Activated CD8-positive, alpha-beta T cell treated with anti-CD3 and anti-CD28 coated beads, Interleukin-2, amount 10 ng/mL, durations not matched to agents 7 days and 5 days (primary cell): ENCODE measurements at regions of chr2 and their contacts with region 1.

Region 1: GRCh38 chr2:241149925-241150659 is at the start of gene PPP1R7:
- DNase-seq: peak; percentile 96
- ATAC-seq: peak; percentile 83
- H3K4me3 Mint-ChIP-seq: peak within 1 kb of the TSS; percentile 96
- H3K27ac Mint-ChIP-seq: peak within 1 kb of the TSS; percentile 91
- H3K4me1 Mint-ChIP-seq: peaks cover 36% of the 10 kb centered on the region
- H3K27me3 Mint-ChIP-seq: no peaks in the 10 kb centered on the region
- total RNA-seq, gene PPP1R7: 90.8 to 97.2 TPM

Region 2: GRCh38 chr2:241081643-241082340 is 68.3 kb before region 1 on chr2:
- CTCF ChIA-PET with region 1: interaction called, 30 read pairs
- POLR2A ChIA-PET with region 1: interaction called, 4 read pairs
- DNase-seq: no peak
- ATAC-seq: no peak
- H3K4me3 Mint-ChIP-seq: no peak overlapping the region
- H3K27ac Mint-ChIP-seq: no peak overlapping the region
- H3K4me1 Mint-ChIP-seq: no peaks in the 10 kb centered on the region
- H3K27me3 Mint-ChIP-seq: no peaks in the 10 kb centered on the region

Region 3: GRCh38 chr2:241102239-241102803 is 47.8 kb before region 1 on chr2 and contains the start of gene MTERF4:
- CTCF ChIA-PET with region 1: interaction called, 8 read pairs
- POLR2A ChIA-PET with region 1: interaction called, 18 read pairs
- DNase-seq: peak; percentile 89
- ATAC-seq: peak; percentile 97
- H3K4me3 Mint-ChIP-seq: peak within 1 kb of the TSS; percentile 96
- H3K27ac Mint-ChIP-seq: peak within 1 kb of the TSS; percentile 98
- H3K4me1 Mint-ChIP-seq: peaks cover 41% of the 10 kb centered on the region
- H3K27me3 Mint-ChIP-seq: no peaks in the 10 kb centered on the region
- total RNA-seq, gene MTERF4: 24.1 to 26.3 TPM

Region 4: DNA sequence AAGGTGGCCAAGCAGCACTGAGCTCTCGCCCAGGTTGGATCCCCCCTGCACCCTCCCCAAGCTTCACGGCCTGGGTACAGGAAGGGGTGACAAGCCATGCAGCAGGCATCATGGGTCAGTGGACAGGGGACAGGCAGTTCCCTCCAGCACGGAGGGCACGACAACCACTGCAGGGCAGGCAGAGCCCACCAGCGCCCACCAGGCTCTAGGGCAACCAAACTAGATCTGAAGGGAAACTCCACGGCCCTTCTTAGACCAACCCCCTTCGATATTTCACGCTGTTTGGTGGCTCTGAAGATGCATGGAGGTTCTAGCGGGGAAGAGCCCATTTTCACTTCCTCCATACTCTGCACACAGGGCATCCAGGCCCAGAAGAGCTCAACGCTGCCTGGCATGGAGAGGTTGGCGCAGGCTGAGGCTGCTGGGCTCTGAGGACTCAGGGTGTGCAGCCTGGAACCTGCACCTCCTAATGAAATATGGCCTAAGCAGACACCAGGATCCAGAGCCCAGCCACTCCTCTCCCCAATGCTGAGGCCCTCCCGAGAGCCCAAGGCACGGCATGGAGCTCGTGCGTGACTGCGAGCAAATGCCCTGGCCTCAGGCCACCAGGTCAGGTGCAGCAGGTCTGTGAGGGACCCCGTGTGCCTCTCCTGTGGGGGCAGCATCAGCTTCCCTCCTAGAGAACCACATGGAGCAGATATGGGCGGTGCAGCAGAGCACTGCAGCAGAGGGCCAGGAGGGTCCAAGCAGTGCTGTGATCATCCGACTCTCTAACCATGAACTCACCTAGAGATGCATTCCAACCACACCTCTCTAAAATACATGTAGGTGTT is 39.3 kb before region 1 on chr2:
- CTCF ChIA-PET with region 1: interaction called, 3 read pairs
- POLR2A ChIA-PET with region 1: interaction called, 37 read pairs
- DNase-seq: no peak
- ATAC-seq: peak; percentile 38
- H3K4me3 Mint-ChIP-seq: peak overlapping the region; percentile 73
- H3K27ac Mint-ChIP-seq: peak overlapping the region; percentile 70
- H3K4me1 Mint-ChIP-seq: peaks cover 51% of the 10 kb centered on the region
- H3K27me3 Mint-ChIP-seq: no peaks in the 10 kb centered on the region